Dendritic cell treated with granulocyte-macrophage colony-stimulating factor and Interleukin-4, amounts not matched to agents 40 ng/mL and 50 ng/mL, for 4 days (primary cell): ENCODE measurements at regions of chr1 and their contacts with region 1.

Region 1: GRCh38 chr1:110619412-110620249 is 13.5 kb upstream of the KCNA2 start:
- H3K4me3 Mint-ChIP-seq: peak overlapping the region; percentile 69
- H3K27ac Mint-ChIP-seq: peak overlapping the region; percentile 44
- H3K4me1 Mint-ChIP-seq: peaks cover 39% of the 10 kb centered on the region
- H3K27me3 Mint-ChIP-seq: peaks cover 7% of the 10 kb centered on the region

Region 2: DNA sequence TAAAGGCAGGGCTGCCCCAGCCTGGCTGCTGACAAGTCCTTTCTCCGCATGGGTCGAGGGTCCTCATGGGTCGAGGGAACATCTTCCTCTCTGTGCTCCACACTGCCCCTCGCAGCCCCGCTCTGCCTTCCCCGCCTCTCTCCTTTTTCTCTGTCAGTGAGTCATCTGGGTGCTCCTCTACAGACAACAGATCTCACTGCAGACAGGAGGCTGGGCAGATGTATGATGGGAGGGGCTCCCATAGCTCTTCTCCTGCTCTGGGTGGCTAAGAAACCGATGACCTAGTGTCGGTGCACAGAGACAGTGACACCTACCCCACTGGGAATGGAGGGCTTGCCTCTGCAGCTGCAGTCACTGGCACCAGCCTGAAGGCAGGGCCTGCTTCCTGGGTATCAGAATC is 106.1 kb before region 1 on chr1:
- intact Hi-C with region 1: no loop called
- H3K4me3 Mint-ChIP-seq: no peak overlapping the region
- H3K27ac Mint-ChIP-seq: peak overlapping the region; percentile 54
- H3K4me1 Mint-ChIP-seq: peaks cover 66% of the 10 kb centered on the region
- H3K27me3 Mint-ChIP-seq: peaks cover 6% of the 10 kb centered on the region

Region 3: DNA sequence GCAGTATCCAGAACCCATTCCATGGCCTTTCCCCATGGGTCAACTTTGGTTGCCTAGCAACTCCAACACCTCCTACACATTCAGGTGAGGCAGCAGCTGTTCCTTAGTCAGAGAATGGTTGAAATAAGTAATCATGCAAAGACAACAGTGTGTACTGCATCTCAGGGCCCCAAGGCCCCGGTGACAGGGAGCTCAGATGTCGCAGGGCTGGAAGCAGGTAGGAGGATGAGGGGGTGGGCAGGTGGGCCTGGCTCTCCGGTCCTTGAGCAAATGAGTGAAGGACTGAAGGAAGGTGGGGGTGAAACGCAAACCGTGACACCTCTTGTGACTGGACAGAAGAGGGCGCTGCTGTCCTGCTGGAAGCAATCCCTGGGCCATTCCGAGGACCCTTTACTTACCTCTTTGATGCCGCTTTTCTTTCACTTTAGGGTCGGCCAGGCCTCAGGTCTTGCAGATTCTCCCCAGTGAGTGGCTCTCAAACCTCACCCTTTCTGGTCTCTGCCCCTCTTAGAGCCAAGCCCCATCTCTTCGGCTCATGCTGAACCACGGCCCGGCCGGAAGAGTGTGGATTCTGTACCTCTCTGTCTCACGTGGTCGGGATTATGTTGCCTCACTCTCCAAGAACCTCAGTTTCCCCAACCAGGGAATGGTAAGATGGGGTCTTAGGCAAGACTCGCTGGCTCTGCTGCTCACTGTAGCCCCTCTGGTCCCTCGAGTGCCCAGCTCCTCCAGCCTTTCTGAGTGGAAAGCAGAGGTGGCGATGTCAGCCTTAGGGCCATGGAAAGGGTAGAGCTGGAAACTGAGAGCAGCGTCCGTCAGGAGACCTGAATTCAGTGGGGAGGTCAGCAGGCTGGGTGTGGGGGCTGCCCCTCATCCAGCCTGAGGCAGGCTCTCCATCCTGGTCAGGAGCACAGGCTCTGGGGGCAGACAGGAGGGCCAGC is 95.0 kb before region 1 on chr1:
- intact Hi-C with region 1: loop called (anchors 5 kb)
- H3K4me3 Mint-ChIP-seq: no peak overlapping the region
- H3K27ac Mint-ChIP-seq: no peak overlapping the region
- H3K4me1 Mint-ChIP-seq: peaks cover 22% of the 10 kb centered on the region
- H3K27me3 Mint-ChIP-seq: peaks cover 53% of the 10 kb centered on the region

Region 4: GRCh38 chr1:110542725-110543124 is 76.9 kb before region 1 on chr1:
- intact Hi-C with region 1: no loop called
- H3K4me3 Mint-ChIP-seq: no peak overlapping the region
- H3K27ac Mint-ChIP-seq: no peak overlapping the region
- H3K4me1 Mint-ChIP-seq: peaks cover 4% of the 10 kb centered on the region
- H3K27me3 Mint-ChIP-seq: peaks cover 15% of the 10 kb centered on the region

Region 5: DNA sequence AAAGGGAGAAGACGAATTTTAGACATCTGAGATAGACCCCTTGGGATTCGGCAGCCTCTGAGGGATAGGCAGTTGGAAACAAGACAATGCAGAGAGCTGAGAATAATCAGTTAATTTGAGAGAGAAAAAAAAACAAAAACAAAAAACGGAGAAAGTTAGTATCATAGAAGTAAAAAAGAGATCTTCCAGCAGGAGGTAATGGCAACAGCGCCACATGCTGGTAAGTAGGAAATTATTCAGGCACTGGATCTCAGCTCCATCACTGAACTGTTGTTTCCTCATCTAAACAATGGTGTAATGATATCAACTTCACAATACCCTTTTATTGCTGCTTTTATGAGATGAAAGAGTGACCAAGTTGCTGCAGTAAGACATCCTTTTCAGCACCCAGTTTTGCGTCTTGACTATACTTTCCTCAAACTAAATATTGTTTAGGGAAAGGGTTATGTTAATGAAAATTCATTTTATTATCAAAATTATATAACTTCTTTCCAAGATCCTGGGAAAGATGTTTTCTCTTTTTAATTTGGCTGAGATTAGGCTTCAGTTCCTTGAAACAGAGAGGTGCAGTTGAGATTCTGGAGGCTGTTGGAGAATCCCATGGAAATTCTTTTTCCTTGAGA is 146.5 kb after region 1 on chr1:
- intact Hi-C with region 1: loop called (anchors 1 kb)
- H3K4me3 Mint-ChIP-seq: no peak overlapping the region
- H3K27ac Mint-ChIP-seq: no peak overlapping the region
- H3K4me1 Mint-ChIP-seq: peaks cover 21% of the 10 kb centered on the region
- H3K27me3 Mint-ChIP-seq: peaks cover 7% of the 10 kb centered on the region

Region 6: GRCh38 chr1:110780600-110781484 is 161.2 kb after region 1 on chr1:
- intact Hi-C with region 1: loop called (anchors 1 kb)
- H3K4me3 Mint-ChIP-seq: no peak overlapping the region
- H3K27ac Mint-ChIP-seq: no peak overlapping the region
- H3K4me1 Mint-ChIP-seq: peaks cover 14% of the 10 kb centered on the region
- H3K27me3 Mint-ChIP-seq: peaks cover 6% of the 10 kb centered on the region

Region 7: DNA sequence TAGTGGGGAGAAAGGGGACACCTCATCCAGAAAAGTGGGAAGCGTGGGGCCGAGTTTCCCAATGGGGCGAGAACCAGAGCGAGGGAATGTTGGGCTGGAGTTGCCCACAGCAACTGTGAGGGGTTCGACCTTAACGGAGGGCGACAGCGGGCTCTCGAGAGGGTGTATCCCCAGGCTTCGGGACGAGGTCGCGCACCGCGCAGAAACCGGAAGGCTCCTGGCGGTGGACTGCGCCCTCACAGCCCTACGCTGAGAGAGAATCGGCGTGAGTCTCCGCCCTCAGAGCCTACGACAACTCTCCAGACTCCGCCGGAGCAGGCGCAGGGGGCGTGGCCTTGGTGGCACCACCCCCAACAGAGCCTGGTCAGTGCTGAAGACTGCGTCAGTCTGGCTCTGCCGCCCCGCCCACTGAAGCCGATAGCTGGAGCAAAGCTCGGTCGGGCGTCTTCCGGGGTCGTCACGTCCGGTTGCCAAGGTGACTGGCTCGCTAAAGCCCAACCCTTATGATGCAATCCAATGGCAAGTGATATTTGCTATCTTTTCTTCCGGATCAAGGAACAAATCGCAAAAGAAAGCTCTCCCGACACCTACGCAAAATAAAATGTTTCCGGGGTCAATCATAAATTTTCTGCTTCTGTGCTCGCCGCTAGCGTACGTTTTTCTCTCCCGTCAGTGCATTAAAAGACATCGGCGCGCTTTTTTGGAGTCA is 344.2 kb after region 1 on chr1 and contains the start of gene LRIF1:
- intact Hi-C with region 1: loop called (anchors 10 kb)
- H3K4me3 Mint-ChIP-seq: peak within 1 kb of the TSS; percentile 85
- H3K27ac Mint-ChIP-seq: peak within 1 kb of the TSS; percentile 99
- H3K4me1 Mint-ChIP-seq: peaks cover 31% of the 10 kb centered on the region
- H3K27me3 Mint-ChIP-seq: peaks cover 23% of the 10 kb centered on the region